Activated CD4-positive, alpha-beta memory T cell treated with anti-CD3 and anti-CD28 coated beads for 36 hours (primary cell): ENCODE measurements at regions of chr14 and their contacts with region 1.

Region 1: DNA sequence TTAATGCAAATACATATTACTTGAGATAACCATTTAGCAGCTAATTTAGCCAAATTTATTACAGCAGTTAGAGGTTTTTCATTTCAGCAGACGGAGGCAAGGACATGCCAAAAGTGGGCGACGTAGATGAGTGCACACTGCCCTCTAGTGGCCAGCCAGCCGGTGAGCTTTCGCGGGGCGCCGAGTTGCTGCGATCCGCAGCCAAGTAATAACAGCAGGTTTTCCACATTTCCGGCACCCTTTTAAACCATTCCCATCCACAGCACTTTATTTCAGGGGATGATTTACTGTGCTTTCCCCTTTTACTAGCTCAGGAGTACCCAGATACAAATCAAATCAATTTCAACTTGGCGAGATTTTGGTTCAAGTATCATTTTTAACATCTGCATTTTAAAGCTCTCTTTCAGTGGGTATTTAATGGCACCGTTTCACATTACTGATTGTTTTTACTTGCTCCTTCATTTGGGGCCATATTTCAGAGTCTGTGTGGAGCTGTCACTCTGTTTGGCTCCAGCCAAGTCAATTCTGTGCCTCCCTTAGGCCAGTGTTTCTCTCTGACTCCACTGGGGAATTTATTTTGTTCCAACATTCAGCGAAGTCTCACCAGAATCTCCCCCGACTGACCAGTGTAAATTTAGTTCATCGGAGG is 158.0 kb downstream of the EGLN3 start:
- DNase-seq: peak; percentile 77
- H3K4me3 Mint-ChIP-seq: peak overlapping the region; percentile 36
- H3K27ac Mint-ChIP-seq: no peak overlapping the region
- H3K4me1 Mint-ChIP-seq: peaks cover 17% of the 10 kb centered on the region
- H3K27me3 Mint-ChIP-seq: peaks cover 28% of the 10 kb centered on the region

Region 2: DNA sequence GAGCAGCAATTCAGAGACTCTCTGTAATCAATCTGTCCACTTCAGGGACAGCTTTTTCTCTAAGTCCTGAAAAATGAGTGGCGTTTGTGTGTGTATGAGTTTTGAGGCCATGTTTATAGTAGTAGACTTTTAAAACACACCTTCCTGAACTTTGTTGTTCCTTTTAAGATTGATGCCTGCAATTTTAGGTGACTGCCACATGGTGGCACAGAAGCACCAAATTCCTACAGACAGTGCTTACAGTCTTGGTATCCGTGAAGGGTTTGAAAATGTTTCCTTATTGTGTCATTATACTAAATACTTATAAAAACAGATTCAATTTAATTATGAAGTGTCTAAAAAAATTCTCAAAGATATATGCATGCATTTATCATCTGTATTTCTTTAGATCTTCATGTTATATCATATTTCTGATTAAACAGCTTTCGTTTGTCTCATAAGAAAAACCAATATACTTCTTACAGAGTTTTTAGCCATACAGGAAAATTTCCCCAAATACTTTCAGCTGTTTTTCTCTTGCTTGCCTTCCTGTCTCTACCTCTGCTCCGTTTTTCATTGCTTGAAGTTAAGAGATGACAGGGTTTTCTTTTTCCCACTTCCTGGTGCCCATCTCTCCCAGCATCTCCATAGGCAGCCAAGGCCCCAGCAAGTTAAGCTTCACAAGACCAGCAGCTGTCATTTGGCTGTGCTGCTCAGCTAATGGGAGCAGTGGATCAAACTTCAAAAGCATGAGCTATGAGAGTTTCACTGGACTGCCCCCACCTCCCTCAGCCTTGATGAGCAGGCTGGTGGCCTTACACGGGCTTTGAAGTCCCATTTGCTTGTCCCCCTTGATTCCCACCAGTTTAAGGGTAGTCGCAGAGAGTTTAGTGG is 1204.2 kb before region 1 on chr14:
- CTCF ChIA-PET with region 1: interaction called, 28 read pairs
- POLR2A ChIA-PET with region 1: no interaction called
- intact Hi-C with region 1: no loop called
- DNase-seq: no peak
- H3K4me3 Mint-ChIP-seq: no peak overlapping the region
- H3K27ac Mint-ChIP-seq: no peak overlapping the region
- H3K4me1 Mint-ChIP-seq: no peaks in the 10 kb centered on the region
- H3K27me3 Mint-ChIP-seq: peaks cover 4% of the 10 kb centered on the region

Region 3: DNA sequence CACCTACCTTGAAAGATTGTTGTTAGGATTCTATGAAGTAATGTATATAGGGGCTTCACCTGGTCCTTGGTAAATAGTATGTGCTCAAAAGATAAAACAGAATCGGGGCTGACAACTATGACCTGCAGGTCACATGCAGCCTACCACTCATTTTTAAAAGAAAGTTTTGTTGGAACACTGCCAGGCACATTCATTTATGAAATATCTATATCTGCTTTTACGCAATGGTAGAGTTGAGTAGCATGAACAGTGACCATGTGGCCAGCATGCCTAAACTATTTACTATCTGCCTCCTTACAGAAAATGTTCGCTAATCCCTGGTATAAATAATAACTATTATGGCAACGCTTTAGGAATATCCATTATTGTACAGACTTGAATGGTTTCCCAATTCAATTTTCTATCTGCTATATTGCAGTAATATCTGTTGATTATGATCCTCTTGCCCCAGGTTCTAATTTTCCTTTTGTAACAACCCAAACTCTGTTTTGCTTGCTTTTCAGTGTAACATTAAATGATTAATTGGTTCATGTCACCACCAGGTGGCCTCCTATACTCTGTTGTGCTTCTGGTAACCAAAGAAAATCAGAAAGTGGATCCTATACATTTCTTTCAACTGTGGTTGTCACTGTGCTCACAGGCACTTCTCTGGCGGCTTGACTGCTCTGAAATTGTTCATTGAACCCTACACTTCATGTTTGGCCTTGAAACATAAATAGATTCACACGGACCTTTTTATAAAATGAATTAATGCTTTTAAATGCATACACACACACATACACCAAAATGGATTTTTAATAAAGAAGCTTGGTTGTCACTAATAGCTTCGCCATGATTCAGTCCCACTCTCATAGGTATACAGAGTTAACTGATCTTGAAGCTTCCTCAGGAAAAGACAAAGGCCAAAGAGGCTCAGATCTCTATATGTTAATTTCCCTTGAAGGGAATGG is 1081.8 kb before region 1 on chr14:
- CTCF ChIA-PET with region 1: interaction called, 7 read pairs
- POLR2A ChIA-PET with region 1: no interaction called
- intact Hi-C with region 1: loop called (anchors 1 kb)
- DNase-seq: peak; percentile 10
- H3K4me3 Mint-ChIP-seq: no peak overlapping the region
- H3K27ac Mint-ChIP-seq: no peak overlapping the region
- H3K4me1 Mint-ChIP-seq: peaks cover 5% of the 10 kb centered on the region
- H3K27me3 Mint-ChIP-seq: no peaks in the 10 kb centered on the region

Region 4: GRCh38 chr14:32939254-32940065 is 853.4 kb before region 1 on chr14:
- CTCF ChIA-PET with region 1: no interaction called
- POLR2A ChIA-PET with region 1: no interaction called
- intact Hi-C with region 1: loop called (anchors 10 kb)
- DNase-seq: peak; percentile 39
- H3K4me3 Mint-ChIP-seq: peak overlapping the region; percentile 71
- H3K27ac Mint-ChIP-seq: no peak overlapping the region
- H3K4me1 Mint-ChIP-seq: peaks cover 10% of the 10 kb centered on the region
- H3K27me3 Mint-ChIP-seq: peaks cover 55% of the 10 kb centered on the region

Region 5: DNA sequence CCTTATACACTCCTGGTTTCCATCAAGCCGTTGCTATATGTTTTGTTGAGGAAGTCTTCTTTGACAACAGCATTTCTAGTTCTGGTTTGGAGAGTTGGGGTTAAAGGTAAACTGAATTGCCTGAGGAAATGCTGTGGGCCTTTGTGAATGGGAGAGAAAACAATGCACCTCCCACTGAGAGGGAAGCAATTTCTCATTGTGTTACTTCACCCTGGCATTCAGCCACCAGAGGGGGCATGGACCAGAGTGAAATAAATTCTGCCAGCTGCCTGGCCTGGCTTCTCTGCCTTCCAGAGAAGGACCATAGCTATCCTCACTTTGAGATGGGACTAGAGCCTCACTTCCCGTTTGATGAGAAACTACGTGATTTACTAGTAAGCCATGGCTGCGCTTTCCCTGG is 317.2 kb before region 1 on chr14:
- CTCF ChIA-PET with region 1: interaction called, 3 read pairs
- POLR2A ChIA-PET with region 1: no interaction called
- intact Hi-C with region 1: loop called (anchors 1 kb)
- DNase-seq: peak; percentile 17
- H3K4me3 Mint-ChIP-seq: no peak overlapping the region
- H3K27ac Mint-ChIP-seq: no peak overlapping the region
- H3K4me1 Mint-ChIP-seq: no peaks in the 10 kb centered on the region
- H3K27me3 Mint-ChIP-seq: no peaks in the 10 kb centered on the region

Region 6: GRCh38 chr14:33805593-33805992 is 12.7 kb after region 1 on chr14:
- CTCF ChIA-PET with region 1: interaction called, 30 read pairs
- POLR2A ChIA-PET with region 1: no interaction called
- intact Hi-C with region 1: no loop called
- DNase-seq: no peak
- H3K4me3 Mint-ChIP-seq: no peak overlapping the region
- H3K27ac Mint-ChIP-seq: no peak overlapping the region
- H3K4me1 Mint-ChIP-seq: peaks cover 3% of the 10 kb centered on the region
- H3K27me3 Mint-ChIP-seq: peaks cover 19% of the 10 kb centered on the region